K562 (cell line): ENCODE measurements at regions of chr3 and their contacts with region 1.

Region 1: GRCh38 chr3:31132132-31132769 is 237.8 kb upstream of the GADL1 start:
- DNase-seq: peak in 2 of 4 experiments; percentile 16 to 38
- ATAC-seq: peak; percentile 33; the same call in 1 of the 3 replicates
- H3K4me3 ChIP-seq: no peak overlapping the region
- H3K27ac ChIP-seq: no peak overlapping the region
- H3K4me1 ChIP-seq: no peaks in the 10 kb centered on the region
- H3K27me3 ChIP-seq: no peaks in the 10 kb centered on the region
- CTCF ChIP-seq: peak in 2 of 3 experiments; percentile 31 to 54; a peak in 3 of 6 replicates
- EP300 ChIP-seq: no peak
- POLR2A ChIP-seq: no peak
- RAD21 ChIP-seq: peak; percentile 92 to 93

Region 2: GRCh38 chr3:30779686-30780287 is 352.5 kb before region 1 on chr3:
- CTCF ChIA-PET with region 1: no interaction called
- POLR2A ChIA-PET with region 1: no interaction called
- in situ Hi-C with region 1: no loop called
- intact Hi-C with region 1: loop called (anchors 5 kb)
- DNase-seq: peak in 2 of 4 experiments; percentile 8 to 28
- ATAC-seq: no peak
- H3K4me3 ChIP-seq: no peak overlapping the region
- H3K27ac ChIP-seq: no peak overlapping the region
- H3K4me1 ChIP-seq: no peaks in the 10 kb centered on the region
- H3K27me3 ChIP-seq: no peaks in the 10 kb centered on the region
- CTCF ChIP-seq: peak in 2 of 3 experiments; percentile 16 to 38; a peak in 2 of 6 replicates
- EP300 ChIP-seq: no peak
- POLR2A ChIP-seq: no peak
- RAD21 ChIP-seq: peak; percentile 59 to 70

Region 3: DNA sequence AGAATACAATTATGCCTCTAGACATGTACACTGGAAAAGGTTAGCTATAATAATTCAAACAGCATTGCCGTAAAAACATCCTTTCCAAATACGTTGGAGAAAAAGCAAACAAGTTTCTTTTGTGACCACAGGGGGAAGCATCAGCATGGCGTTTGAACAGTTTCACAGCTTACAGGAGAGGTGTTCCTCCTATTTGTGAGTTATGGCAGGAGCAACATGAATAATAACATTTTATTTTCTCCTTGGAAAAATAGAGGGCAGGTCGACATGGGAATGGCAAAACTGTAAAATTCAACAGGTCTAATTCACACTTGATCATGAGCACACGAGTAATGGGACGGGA is 198.1 kb before region 1 on chr3:
- CTCF ChIA-PET with region 1: no interaction called
- POLR2A ChIA-PET with region 1: no interaction called
- in situ Hi-C with region 1: no loop called
- intact Hi-C with region 1: loop called (anchors 5 kb)
- DNase-seq: peak in 1 of 4 experiments; percentile 42
- ATAC-seq: peak; percentile 42; the same call in 2 of the 3 replicates
- H3K4me3 ChIP-seq: no peak overlapping the region
- H3K27ac ChIP-seq: no peak overlapping the region
- H3K4me1 ChIP-seq: no peaks in the 10 kb centered on the region
- H3K27me3 ChIP-seq: no peaks in the 10 kb centered on the region
- CTCF ChIP-seq: peak in 1 of 3 experiments; percentile 33; a peak in 2 of 6 replicates
- EP300 ChIP-seq: no peak
- POLR2A ChIP-seq: no peak
- RAD21 ChIP-seq: peak; percentile 65 to 66

Region 4: GRCh38 chr3:31064021-31064420 is 68.2 kb before region 1 on chr3:
- CTCF ChIA-PET with region 1: no interaction called
- POLR2A ChIA-PET with region 1: no interaction called
- in situ Hi-C with region 1: no loop called
- intact Hi-C with region 1: no loop called
- DNase-seq: no peak
- ATAC-seq: no peak
- H3K4me3 ChIP-seq: no peak overlapping the region
- H3K27ac ChIP-seq: no peak overlapping the region
- H3K4me1 ChIP-seq: no peaks in the 10 kb centered on the region
- H3K27me3 ChIP-seq: no peaks in the 10 kb centered on the region
- CTCF ChIP-seq: no peak
- EP300 ChIP-seq: no peak
- POLR2A ChIP-seq: no peak
- RAD21 ChIP-seq: no peak